ENCODE measurements at regions of chr5 and their contacts with region 1.

Region 1: GRCh38 chr5:157563373-157563928 is 12.1 kb downstream of the ADAM19 start:
- DNase-seq: no peak
- ATAC-seq: no peak
- H3K4me3 ChIP-seq: no peak overlapping the region
- H3K27ac ChIP-seq: no peak overlapping the region
- H3K4me1 ChIP-seq: peaks cover 8% of the 10 kb centered on the region; the same call in 1 of the 2 replicates
- H3K27me3 ChIP-seq: no peaks in the 10 kb centered on the region
- CTCF ChIP-seq: no peak
- EP300 ChIP-seq: no peak
- POLR2A ChIP-seq: no peak
- RAD21 ChIP-seq: no peak

Region 2: DNA sequence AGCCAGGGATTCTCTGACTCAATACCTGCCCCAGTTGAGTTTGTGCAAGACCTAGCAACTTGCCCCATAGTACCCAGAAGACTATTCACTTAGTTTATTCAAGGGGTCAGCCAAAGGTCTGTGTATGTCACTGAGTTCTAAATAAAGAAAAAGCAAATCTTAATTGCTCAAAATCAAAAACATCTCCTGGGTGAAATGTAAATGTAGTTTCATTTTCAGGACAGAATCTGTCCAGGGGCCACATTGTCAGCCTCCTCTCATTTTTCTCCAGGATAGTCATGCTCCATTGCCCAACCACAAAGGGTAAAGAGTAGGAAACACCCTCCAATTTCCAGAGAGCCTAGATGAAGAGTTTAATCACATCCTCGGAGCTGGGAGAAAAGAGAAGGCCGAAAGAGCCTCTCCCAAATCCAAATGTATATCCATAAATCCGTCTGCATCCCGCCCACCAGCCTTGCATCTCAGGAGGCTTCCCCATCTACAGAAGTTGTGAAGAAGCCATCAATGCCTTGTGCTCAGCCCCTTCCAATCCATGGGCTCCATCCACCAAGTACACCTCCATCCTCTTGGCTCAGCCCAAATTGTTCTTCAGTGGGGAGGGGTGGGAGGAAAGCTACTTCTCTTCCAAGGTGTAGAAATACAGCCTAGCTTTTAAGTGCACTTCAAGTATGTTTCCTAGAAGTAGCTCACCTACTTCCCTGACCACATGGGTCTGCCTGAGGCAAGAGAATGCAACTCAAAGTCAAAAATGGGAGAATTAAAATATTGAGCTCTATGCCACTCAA is 14.7 kb before region 1 on chr5:
- CTCF ChIA-PET with region 1: interaction called, 6 read pairs
- POLR2A ChIA-PET with region 1: interaction called, 4 read pairs
- RAD21 ChIA-PET with region 1: interaction called, 4 read pairs
- SMC1A ChIA-PET with region 1: interaction called, 79 read pairs
- in situ Hi-C with region 1: no loop called
- intact Hi-C with region 1: no loop called
- DNase-seq: no peak
- ATAC-seq: peak; percentile 42
- H3K4me3 ChIP-seq: 0 out of 2 replicates have a peak overlapping the region, but pooled peaks have one; percentile 21
- H3K27ac ChIP-seq: peak overlapping the region; percentile 35; the same call in 1 of the 2 replicates
- H3K4me1 ChIP-seq: peaks cover 48% of the 10 kb centered on the region
- H3K27me3 ChIP-seq: no peaks in the 10 kb centered on the region
- CTCF ChIP-seq: no peak
- EP300 ChIP-seq: no peak
- POLR2A ChIP-seq: no peak
- RAD21 ChIP-seq: no peak

Measured in GM12878 (cell line).